ENCODE measurements at regions of chr2 and their contacts with region 1.

Region 1: DNA sequence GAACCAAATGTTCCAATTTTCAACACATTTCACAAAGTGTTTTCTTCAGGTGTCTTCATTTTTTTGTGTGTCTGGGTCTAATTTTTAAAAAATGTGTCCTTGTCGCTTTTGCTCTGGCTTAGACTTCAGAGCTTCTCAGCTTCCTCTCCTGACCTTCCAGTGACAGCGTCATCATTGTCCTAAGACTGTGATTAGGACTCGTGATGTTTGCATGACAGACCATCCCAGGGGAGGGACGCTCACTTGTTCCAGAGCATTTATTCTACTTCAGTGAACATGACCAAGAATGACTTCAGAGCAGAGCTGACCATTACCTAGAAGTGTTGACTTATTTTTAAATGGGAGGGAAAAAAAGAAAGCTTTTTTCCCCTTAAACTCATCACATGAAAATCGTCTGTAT is 591.9 kb downstream of the IRS1 start:
- DNase-seq: no peak
- H3K4me3 ChIP-seq: no peak overlapping the region
- H3K27ac ChIP-seq: no peak overlapping the region
- H3K4me1 ChIP-seq: peaks cover 7% of the 10 kb centered on the region
- H3K27me3 ChIP-seq: no peaks in the 10 kb centered on the region
- CTCF ChIP-seq: no peak
- POLR2A ChIP-seq: no peak

Region 2: GRCh38 chr2:224561234-224562005 is 1646.3 kb before region 1 on chr2:
- intact Hi-C with region 1: no loop called
- DNase-seq: no peak
- H3K4me3 ChIP-seq: no peak overlapping the region
- H3K27ac ChIP-seq: no peak overlapping the region
- H3K4me1 ChIP-seq: peaks cover 53% of the 10 kb centered on the region
- H3K27me3 ChIP-seq: no peaks in the 10 kb centered on the region
- CTCF ChIP-seq: no peak
- POLR2A ChIP-seq: no peak

Region 3: DNA sequence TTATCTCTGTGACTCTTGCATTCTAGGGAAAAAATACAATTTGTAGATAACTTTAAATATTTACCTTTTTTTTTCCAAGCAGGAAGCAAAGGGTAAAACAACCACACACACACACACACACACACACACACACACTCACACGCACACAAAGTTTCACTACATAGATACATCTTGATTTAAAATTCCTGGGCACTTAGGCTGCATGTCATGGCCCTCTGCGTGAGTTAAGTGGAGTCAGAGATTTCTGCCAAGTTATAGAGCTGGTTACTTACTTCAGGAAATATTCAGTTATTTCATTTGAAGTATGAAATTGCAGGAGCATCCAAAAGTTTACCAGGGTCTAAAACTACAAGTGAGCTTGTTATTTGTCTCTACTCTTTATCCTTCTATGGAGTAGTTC is 20.1 kb before region 1 on chr2:
- intact Hi-C with region 1: loop called (anchors 1 kb)
- DNase-seq: no peak
- H3K4me3 ChIP-seq: no peak overlapping the region
- H3K27ac ChIP-seq: no peak overlapping the region
- H3K4me1 ChIP-seq: peaks cover 33% of the 10 kb centered on the region
- H3K27me3 ChIP-seq: no peaks in the 10 kb centered on the region
- CTCF ChIP-seq: no peak
- POLR2A ChIP-seq: no peak

Measured in vagina (tissue), 2 donors.